ENCODE measurements at regions of chr20 and their contacts with region 1.

Region 1: GRCh38 chr20:44800398-44801046 is 9.8 kb downstream of the RIMS4 start:
- DNase-seq: peak in 1 of 2 experiments; percentile 75
- H3K4me3 ChIP-seq: no peak overlapping the region
- H3K27ac ChIP-seq: no peak overlapping the region
- H3K4me1 ChIP-seq: peaks cover 5 to 9% (median 7%) of the 10 kb centered on the region in 4 experiments
- H3K27me3 ChIP-seq: no peaks in the 10 kb centered on the region
- CTCF ChIP-seq: peak in 2 of 3 experiments; percentile 45 to 67; a peak in 3 of 4 replicates
- EP300 ChIP-seq: no peak
- POLR2A ChIP-seq: no peak
- RAD21 ChIP-seq: peak; percentile 64 to 72

Region 2: DNA sequence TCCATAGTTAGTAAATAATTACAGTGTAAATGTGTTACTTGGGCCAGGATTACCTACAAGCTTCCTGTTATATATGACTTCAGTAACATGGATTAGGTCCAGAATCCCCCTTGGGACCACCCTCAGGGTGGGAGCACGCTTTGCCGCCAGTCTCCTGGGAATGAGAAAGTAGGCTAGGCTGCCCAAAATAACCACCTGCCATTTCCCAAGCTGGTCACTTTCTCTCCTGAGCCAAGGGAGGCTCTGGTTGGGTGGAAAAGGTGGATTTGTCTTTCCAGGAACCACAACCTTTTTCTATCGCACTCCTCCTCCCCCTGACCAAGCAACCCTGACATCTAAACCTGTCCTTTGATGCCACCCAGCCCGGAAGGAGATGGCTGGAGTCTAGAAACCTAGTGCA is 19.4 kb after region 1 on chr20:
- CTCF ChIA-PET with region 1: interaction called, 12 read pairs
- POLR2A ChIA-PET with region 1: no interaction called
- DNase-seq: no peak
- H3K4me3 ChIP-seq: no peak overlapping the region
- H3K27ac ChIP-seq: no peak overlapping the region
- H3K4me1 ChIP-seq: peaks cover 0 to 4% (median 1%) of the 10 kb centered on the region in 4 experiments; a peak in 1 of 7 replicates
- H3K27me3 ChIP-seq: no peaks in the 10 kb centered on the region
- CTCF ChIP-seq: no peak
- EP300 ChIP-seq: no peak
- POLR2A ChIP-seq: no peak
- RAD21 ChIP-seq: no peak

Region 3: GRCh38 chr20:44832724-44833123 is 32.2 kb after region 1 on chr20:
- CTCF ChIA-PET with region 1: interaction called, 11 read pairs
- POLR2A ChIA-PET with region 1: no interaction called
- DNase-seq: no peak
- H3K4me3 ChIP-seq: no peak overlapping the region
- H3K27ac ChIP-seq: no peak overlapping the region
- H3K4me1 ChIP-seq: peaks cover 0 to 3% (median 2%) of the 10 kb centered on the region in 4 experiments; a peak in 3 of 7 replicates
- H3K27me3 ChIP-seq: no peaks in the 10 kb centered on the region
- CTCF ChIP-seq: no peak
- EP300 ChIP-seq: no peak
- POLR2A ChIP-seq: no peak
- RAD21 ChIP-seq: no peak

Region 4: GRCh38 chr20:44849703-44850102 is 49.2 kb after region 1 on chr20:
- CTCF ChIA-PET with region 1: interaction called, 15 read pairs
- POLR2A ChIA-PET with region 1: no interaction called
- DNase-seq: no peak
- H3K4me3 ChIP-seq: no peak overlapping the region
- H3K27ac ChIP-seq: no peak overlapping the region
- H3K4me1 ChIP-seq: peaks cover 0 to 2% (median under 1%) of the 10 kb centered on the region in 4 experiments; a peak in 2 of 7 replicates
- H3K27me3 ChIP-seq: no peaks in the 10 kb centered on the region
- CTCF ChIP-seq: peak in 2 of 3 experiments; percentile 2 to 19; a peak in 1 of 4 replicates
- EP300 ChIP-seq: no peak
- POLR2A ChIP-seq: no peak
- RAD21 ChIP-seq: peak in 1 of 2 experiments; percentile 12; a peak in 1 of 4 replicates

Region 5: GRCh38 chr20:44861531-44862006 is 61.0 kb after region 1 on chr20:
- CTCF ChIA-PET with region 1: interaction called, 43 read pairs
- POLR2A ChIA-PET with region 1: interaction called, 3 read pairs
- DNase-seq: peak in 1 of 2 experiments; percentile 10
- H3K4me3 ChIP-seq: no peak overlapping the region
- H3K27ac ChIP-seq: no peak overlapping the region
- H3K4me1 ChIP-seq: no peaks in the 10 kb centered on the region
- H3K27me3 ChIP-seq: no peaks in the 10 kb centered on the region
- CTCF ChIP-seq: no peak
- EP300 ChIP-seq: no peak
- POLR2A ChIP-seq: no peak
- RAD21 ChIP-seq: no peak

Region 6: DNA sequence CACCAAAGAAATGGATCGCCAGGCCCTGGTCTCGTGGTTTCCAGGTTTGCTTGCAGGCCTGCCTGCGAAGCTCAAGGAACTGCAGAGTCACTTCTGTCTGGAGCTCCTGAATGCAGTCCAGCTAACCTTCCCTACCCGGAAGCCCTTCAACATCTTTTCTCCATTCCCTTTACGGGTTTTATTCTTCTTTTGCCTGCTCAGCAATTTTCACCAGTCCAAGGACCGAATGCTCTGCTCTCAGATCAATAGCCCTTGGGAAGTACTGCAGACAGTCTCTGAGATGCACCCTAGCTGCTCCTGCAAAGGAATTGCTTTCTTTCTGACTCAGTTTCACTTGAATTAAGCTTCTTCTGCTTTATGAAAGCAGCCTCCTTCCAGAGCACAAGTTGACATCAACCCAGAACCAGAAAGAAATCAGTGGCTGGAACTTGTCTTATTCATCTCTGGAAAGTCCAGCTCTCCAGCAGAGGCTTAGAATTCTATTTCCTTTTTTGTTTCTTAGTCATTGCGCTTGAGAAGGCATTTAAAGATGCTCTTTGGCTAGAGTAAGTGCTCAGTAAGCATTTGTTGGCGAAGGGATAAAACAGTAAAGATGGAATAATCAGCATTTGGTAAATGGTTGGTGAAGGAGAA is 66.3 kb after region 1 on chr20:
- CTCF ChIA-PET with region 1: interaction called, 43 read pairs
- POLR2A ChIA-PET with region 1: interaction called, 3 read pairs
- DNase-seq: no peak
- H3K4me3 ChIP-seq: no peak overlapping the region
- H3K27ac ChIP-seq: no peak overlapping the region
- H3K4me1 ChIP-seq: no peaks in the 10 kb centered on the region
- H3K27me3 ChIP-seq: no peaks in the 10 kb centered on the region
- CTCF ChIP-seq: no peak
- EP300 ChIP-seq: no peak
- POLR2A ChIP-seq: no peak
- RAD21 ChIP-seq: no peak